Heart right ventricle (tissue), 16 donors: ENCODE measurements at regions of chr15 and their contacts with region 1.

Region 1: GRCh38 chr15:55094136-55094535 is 102.6 kb downstream of the RSL24D1 start:
- DNase-seq: no peak
- ATAC-seq: no peak
- H3K4me3 ChIP-seq: no peak overlapping the region
- H3K27ac ChIP-seq: no peak overlapping the region
- H3K4me1 ChIP-seq: no peaks in the 10 kb centered on the region
- H3K27me3 ChIP-seq: peaks cover 0 to 4% (median 0%) of the 10 kb centered on the region in 7 donors
- CTCF ChIP-seq: no peak

Region 2: GRCh38 chr15:55124616-55125015 is 30.5 kb after region 1 on chr15:
- intact Hi-C with region 1: no loop called
- DNase-seq: no peak
- ATAC-seq: no peak
- H3K4me3 ChIP-seq: no peak overlapping the region
- H3K27ac ChIP-seq: no peak overlapping the region
- H3K4me1 ChIP-seq: peaks cover 0 to 5% (median 0%) of the 10 kb centered on the region in 9 donors
- H3K27me3 ChIP-seq: no peaks in the 10 kb centered on the region
- CTCF ChIP-seq: no peak

Region 3: GRCh38 chr15:55151631-55152030 is 57.5 kb after region 1 on chr15:
- intact Hi-C with region 1: loop called in 1 of 10 experiments (anchors 10 kb)
- DNase-seq: no peak
- ATAC-seq: no peak
- H3K4me3 ChIP-seq: no peak overlapping the region
- H3K27ac ChIP-seq: no peak overlapping the region
- H3K4me1 ChIP-seq: no peaks in the 10 kb centered on the region
- H3K27me3 ChIP-seq: no peaks in the 10 kb centered on the region
- CTCF ChIP-seq: no peak

Region 4: GRCh38 chr15:55297315-55297714 is 203.2 kb after region 1 on chr15:
- intact Hi-C with region 1: no loop called
- DNase-seq: no peak
- ATAC-seq: no peak
- H3K4me3 ChIP-seq: no peak overlapping the region
- H3K27ac ChIP-seq: no peak overlapping the region
- H3K4me1 ChIP-seq: no peaks in the 10 kb centered on the region
- H3K27me3 ChIP-seq: no peaks in the 10 kb centered on the region
- CTCF ChIP-seq: no peak